BJ (cell line): ENCODE measurements at regions of chr17 and their contacts with region 1.

Region 1: DNA sequence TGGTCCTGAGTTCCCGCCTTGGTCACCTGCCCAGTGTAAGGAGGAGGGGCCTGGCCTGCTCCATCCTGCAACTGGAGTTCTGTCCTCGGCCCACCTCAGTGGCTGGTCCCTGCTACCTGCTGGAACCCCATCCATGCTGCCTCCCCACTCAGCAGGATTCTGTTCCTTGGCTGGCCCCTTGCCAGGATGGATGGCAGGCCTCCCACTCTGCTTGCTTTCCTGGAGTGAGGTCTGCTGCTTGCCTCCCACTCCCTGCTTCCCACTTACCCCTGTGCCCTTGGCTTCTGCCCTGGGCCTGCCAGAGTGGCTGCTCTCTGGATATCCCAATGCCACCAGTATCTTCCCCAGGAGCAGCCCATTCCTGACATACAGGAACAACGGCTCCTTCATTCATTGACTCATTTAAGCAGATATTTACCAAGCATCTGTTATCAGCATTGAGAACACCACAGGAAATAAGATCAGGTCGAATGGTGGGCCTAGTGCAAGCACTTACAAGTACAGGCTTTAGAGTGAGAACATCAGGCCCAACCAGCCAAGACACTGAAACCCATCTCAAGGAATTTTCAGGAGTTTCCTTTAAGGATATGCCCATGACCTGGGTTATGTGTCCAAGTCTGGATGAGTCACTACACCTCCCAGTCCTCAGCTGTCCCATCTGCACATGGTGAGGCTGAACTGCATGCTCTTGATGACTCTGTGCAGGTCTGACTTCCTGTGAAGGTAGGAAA is 17.0 kb upstream of the RPRML start:
- DNase-seq: no peak
- H3K4me3 ChIP-seq: no peak overlapping the region
- H3K27me3 ChIP-seq: 0 out of 2 replicates have a peak, but pooled peaks cover 2% of the 10 kb centered on the region
- CTCF ChIP-seq: no peak

Region 2: DNA sequence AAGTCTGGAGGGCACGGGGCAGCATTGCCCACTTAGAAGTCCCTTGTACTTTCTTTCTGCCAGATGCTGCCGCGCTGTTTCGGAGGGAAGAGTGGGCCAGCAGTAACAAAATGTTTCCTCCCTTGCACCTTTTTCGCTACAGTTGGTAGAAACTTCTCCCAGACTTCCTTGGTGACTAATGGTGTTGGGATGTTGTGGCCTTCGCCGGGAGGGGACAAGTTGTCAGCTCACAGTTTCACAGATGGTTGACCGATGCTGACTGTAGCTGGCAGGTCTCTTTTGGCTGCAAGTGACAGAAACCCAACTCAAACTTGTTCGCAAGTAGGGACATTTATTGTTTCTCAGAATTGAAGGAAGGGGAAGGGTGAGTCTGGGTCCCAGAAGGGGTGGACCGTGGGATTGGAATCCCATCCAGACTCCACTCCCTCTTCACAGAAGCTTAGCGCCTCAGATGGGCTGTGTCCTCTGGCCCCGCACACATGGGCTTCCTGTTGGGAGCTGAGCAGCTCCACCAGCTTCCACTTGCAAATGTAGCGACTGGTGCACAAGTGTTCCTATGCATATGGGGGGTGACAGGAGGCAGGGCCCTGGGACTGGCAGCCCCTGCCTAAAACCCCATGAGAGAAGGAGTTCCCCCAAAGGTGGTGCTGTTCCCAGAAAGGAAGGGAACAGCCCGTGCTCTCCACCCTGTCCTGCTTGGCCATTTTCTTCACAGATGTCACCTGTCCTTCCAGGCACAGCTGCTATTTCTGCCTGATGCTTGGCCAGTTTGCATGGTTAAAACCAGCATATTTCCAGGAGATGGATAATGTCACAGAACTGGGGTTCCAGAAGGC is 14.0 kb after region 1 on chr17:
- CTCF ChIA-PET with region 1: interaction called, 12 read pairs
- POLR2A ChIA-PET with region 1: no interaction called
- DNase-seq: no peak
- H3K4me3 ChIP-seq: no peak overlapping the region
- H3K27me3 ChIP-seq: no peaks in the 10 kb centered on the region
- CTCF ChIP-seq: no peak